ENCODE measurements at regions of chr11 and their contacts with region 1.

Region 1: DNA sequence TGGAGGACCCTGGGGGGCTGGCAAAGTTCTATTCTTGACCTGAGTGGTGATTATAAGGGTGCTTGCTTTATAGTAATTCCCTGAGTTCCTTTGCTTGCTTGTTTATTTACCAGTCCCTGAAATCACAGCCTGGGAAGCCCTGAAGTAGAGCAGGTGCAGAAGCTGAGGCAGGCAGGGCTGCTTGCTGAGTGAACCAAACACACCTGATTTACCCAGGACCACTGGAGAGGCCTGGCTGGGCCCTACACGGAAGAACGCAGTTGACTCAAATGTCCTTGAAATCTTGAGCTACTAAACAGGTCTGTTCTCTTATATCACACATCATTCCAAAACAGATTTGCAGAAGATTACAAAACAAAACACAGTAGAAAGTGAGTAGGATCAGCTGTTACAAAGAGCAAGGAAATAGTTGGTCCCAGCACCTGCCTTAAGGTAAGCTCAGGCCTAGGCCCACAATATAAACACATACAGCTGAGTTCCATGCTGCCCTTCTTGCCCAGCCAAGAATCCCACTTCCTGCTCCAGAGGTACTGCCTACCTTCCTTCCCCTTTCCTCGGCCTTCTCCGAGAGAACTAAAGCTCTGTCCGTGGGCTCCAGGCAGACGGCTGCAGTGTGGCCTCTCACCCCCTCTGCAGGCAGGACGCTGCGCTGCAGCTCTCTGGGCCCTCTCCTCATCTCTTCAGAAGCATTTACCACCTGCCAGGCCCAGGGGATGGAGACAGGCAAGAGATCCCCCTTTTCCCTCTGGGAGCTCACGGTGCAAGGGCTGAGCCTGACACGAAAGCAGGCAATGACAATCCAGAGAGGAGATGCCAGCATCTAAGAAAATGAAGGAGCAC is 46.1 kb upstream of the SCUBE2 start:
- DNase-seq: no peak
- H3K4me3 ChIP-seq: no peak overlapping the region
- CTCF ChIP-seq: peak; percentile 93

Region 2: GRCh38 chr11:8917157-8917825 is 220.2 kb before region 1 on chr11:
- CTCF ChIA-PET with region 1: interaction called, 17 read pairs
- POLR2A ChIA-PET with region 1: no interaction called
- DNase-seq: peak; percentile 84
- H3K4me3 ChIP-seq: peak overlapping the region; percentile 9
- CTCF ChIP-seq: no peak

Region 3: GRCh38 chr11:9003573-9004309 is 133.8 kb before region 1 on chr11 and contains the start of gene NRIP3:
- CTCF ChIA-PET with region 1: interaction called, 10 read pairs
- POLR2A ChIA-PET with region 1: no interaction called
- DNase-seq: no peak
- H3K4me3 ChIP-seq: peak within 1 kb of the TSS; percentile 65
- CTCF ChIP-seq: no peak

Region 4: GRCh38 chr11:9025101-9025850 is 112.2 kb before region 1 on chr11:
- CTCF ChIA-PET with region 1: interaction called, 162 read pairs
- POLR2A ChIA-PET with region 1: no interaction called
- DNase-seq: no peak
- H3K4me3 ChIP-seq: no peak overlapping the region
- CTCF ChIP-seq: no peak

Region 5: DNA sequence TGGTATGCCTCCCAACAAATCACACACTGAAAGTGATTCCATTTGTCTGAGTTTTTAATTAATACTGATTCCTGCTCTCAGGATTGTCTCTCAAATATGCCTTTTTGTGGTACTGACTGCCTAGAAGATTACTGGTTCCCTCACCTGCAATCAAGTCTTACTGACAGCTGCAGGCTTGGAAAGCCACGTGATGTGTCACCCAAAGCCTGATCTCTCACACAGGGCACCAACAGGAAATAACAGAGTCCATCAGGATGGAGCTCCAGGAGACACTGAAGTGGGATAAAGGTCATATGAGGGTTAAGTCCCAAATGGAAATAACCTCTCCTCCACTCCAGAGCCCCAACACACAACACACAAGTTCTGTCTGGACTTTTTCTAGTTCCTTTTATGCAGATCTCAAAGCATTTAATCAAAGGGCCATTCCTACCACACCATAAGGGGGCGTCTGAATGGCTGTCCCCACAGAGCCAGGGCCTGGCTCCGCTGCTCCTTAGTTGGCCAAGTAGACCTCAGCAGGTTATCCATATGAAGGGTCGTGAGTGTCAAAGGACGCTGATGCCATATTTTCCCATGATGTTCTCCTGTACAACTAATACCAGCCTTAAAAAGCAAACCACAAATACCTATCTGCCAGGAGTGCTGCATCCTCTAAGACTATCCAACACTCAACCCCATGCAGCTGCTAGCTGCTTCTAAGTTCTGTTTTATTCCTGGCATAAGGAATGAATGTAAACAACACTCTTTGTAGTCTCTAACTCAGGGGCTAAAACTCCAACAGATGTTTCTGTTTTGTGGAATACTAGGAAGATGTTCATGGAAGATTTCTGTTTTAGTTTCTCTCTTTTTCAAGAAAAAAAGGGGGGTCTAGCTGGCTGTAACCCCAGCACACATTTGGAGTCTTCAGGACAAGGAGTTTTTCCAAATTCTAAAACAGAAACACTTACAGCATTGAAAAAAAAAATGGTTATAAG is 59.1 kb before region 1 on chr11:
- CTCF ChIA-PET with region 1: no interaction called
- POLR2A ChIA-PET with region 1: no interaction called
- DNase-seq: no peak
- H3K4me3 ChIP-seq: no peak overlapping the region
- CTCF ChIP-seq: no peak

Region 6: GRCh38 chr11:9120664-9121485 is 16.6 kb before region 1 on chr11:
- CTCF ChIA-PET with region 1: interaction called, 30 read pairs
- POLR2A ChIA-PET with region 1: no interaction called
- DNase-seq: no peak
- H3K4me3 ChIP-seq: no peak overlapping the region
- CTCF ChIP-seq: peak; percentile 14

Region 7: GRCh38 chr11:9155930-9156329 is 18.4 kb after region 1 on chr11:
- CTCF ChIA-PET with region 1: interaction called, 54 read pairs
- POLR2A ChIA-PET with region 1: interaction called, 3 read pairs
- DNase-seq: no peak
- H3K4me3 ChIP-seq: no peak overlapping the region
- CTCF ChIP-seq: no peak

Measured in AG04449 (cell line).